PC-3 (cell line): ENCODE measurements at regions of chr2 and their contacts with region 1.

Region 1: DNA sequence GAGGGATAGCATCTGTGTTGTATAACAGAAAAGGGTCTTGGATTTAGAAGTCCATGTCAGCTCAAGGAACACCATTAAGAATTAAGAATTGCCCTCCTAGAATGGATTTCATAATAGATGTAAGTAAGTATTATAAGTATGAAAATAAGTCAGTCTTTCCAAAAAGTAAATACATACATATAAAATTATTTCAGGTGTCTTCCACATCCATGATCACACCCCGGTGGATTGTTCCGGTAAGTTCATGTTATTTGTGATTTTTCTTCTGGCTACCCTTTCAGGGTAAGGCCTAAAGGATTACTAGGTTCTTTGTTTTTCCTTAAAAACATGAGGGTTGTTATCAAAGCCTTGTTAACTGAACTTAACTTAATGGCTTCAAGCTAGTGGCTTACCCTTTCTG is 55.9 kb downstream of the TMEM185B start:
- DNase-seq: peak; percentile 12
- ATAC-seq: no peak
- H3K4me3 ChIP-seq: no peak overlapping the region
- H3K27ac ChIP-seq: no peak overlapping the region
- H3K4me1 ChIP-seq: no peaks in the 10 kb centered on the region
- H3K27me3 ChIP-seq: no peaks in the 10 kb centered on the region
- CTCF ChIP-seq: peak; percentile 51; the same call in 1 of the 2 replicates

Region 2: GRCh38 chr2:120128216-120128615 is 39.1 kb before region 1 on chr2:
- CTCF ChIA-PET with region 1: no interaction called
- POLR2A ChIA-PET with region 1: no interaction called
- intact Hi-C with region 1: loop called (anchors 5 kb)
- DNase-seq: no peak
- ATAC-seq: no peak
- H3K4me3 ChIP-seq: no peak overlapping the region
- H3K27ac ChIP-seq: no peak overlapping the region
- H3K4me1 ChIP-seq: peaks cover 2% of the 10 kb centered on the region
- H3K27me3 ChIP-seq: no peaks in the 10 kb centered on the region
- CTCF ChIP-seq: no peak